PC-9 (cell line): ENCODE measurements at regions of chr12 and their contacts with region 1.

Region 1: DNA sequence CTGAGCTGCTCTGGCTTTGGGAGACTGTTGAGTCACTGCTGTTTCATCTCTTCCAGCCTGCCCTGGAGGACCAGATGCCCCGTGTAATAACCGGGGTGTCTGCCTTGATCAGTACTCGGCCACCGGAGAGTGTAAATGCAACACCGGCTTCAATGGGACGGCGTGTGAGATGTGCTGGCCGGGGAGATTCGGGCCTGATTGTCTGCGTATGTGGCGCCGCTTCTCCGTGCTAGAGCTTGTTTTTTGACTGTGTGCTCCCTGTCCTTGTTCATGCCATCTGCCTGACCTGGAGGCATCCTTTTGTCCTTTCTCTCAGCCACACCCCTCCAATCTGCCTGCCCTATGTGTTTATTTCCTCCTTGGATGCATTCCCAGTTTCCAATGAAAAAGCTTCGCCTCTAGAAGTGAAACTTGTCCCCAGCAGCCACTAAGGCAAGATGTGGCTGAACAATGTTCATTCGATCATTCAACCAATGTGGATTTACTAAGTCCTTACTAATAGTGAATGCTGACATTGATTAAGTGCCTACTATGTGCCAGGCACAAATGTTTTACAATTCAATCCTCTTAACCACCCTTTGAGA is 98.6 kb downstream of the NT5DC3 start:
- DNase-seq: peak; percentile 59 to 63
- H3K4me3 ChIP-seq: no peak overlapping the region
- H3K27ac ChIP-seq: no peak overlapping the region
- H3K4me1 ChIP-seq: peaks cover 9% of the 10 kb centered on the region
- H3K27me3 ChIP-seq: no peaks in the 10 kb centered on the region
- CTCF ChIP-seq: no peak

Region 2: DNA sequence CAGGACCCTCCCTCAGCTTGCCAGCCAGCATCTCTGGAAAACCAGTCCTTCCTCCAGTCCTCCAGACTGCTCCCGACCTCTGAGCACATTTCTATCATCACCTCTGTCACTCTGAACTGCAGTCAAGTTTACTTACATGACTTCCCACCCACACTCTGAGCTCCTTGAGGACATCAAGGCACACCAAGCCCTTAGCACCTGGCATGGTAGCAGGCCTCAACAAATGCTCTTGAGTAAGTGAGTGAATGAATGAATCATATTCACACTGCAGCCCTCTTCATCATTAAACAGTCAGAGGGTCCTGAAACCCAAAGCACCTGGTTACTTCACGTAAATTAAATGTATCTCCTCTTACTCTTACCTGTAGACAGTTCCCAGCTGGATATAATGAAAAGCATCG is 63.5 kb after region 1 on chr12:
- CTCF ChIA-PET with region 1: interaction called, 23 read pairs
- POLR2A ChIA-PET with region 1: no interaction called
- intact Hi-C with region 1: no loop called
- DNase-seq: no peak
- H3K4me3 ChIP-seq: no peak overlapping the region
- H3K27ac ChIP-seq: peak overlapping the region; percentile 94
- H3K4me1 ChIP-seq: peaks cover 70% of the 10 kb centered on the region
- H3K27me3 ChIP-seq: no peaks in the 10 kb centered on the region
- CTCF ChIP-seq: no peak